ENCODE measurements at regions of chr6 and their contacts with region 1.

Region 1: DNA sequence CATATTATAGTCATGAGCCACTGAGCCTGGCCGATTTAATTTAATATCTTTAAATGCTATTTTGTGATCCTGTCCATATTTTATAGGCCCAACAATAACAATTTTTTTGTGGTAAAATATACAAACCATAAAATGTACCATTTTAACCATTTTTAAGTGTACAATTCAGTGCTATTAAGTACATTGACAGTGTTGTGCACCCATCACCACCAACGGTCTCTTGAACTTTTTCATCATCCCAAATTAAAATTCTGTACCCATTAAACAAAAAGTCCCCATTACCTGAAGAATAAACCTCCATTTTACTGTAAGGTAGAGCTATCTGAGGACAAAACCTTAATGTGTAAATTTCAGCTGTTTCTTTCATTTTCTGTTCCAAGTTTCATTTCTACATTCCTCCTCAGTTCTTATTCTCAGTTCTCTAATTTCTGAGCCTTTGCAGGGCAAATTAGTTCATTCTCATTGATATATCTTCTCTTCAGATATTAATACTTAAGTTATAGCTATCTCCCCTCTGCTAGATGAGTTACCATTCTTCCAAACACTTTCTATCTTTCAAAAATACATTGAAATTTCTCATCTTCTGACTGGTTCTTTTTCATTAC is 10.3 kb downstream of the MTO1 start:
- DNase-seq: no peak
- H3K4me3 ChIP-seq: no peak overlapping the region
- H3K4me3 Mint-ChIP-seq: no peak overlapping the region
- H3K27ac Mint-ChIP-seq: no peak overlapping the region
- H3K4me1 ChIP-seq: no peaks in the 10 kb centered on the region
- H3K4me1 Mint-ChIP-seq: no peaks in the 10 kb centered on the region
- H3K27me3 ChIP-seq: no peaks in the 10 kb centered on the region
- H3K27me3 Mint-ChIP-seq: no peaks in the 10 kb centered on the region
- CTCF ChIP-seq: no peak

Region 2: GRCh38 chr6:73604020-73604419 is 132.2 kb after region 1 on chr6:
- CTCF ChIA-PET with region 1: no interaction called
- POLR2A ChIA-PET with region 1: no interaction called
- intact Hi-C with region 1: loop called (anchors 1 kb)
- DNase-seq: no peak
- H3K4me3 ChIP-seq: no peak overlapping the region
- H3K4me3 Mint-ChIP-seq: no peak overlapping the region
- H3K27ac Mint-ChIP-seq: no peak overlapping the region
- H3K4me1 ChIP-seq: no peaks in the 10 kb centered on the region
- H3K4me1 Mint-ChIP-seq: no peaks in the 10 kb centered on the region
- H3K27me3 ChIP-seq: no peaks in the 10 kb centered on the region
- H3K27me3 Mint-ChIP-seq: no peaks in the 10 kb centered on the region
- CTCF ChIP-seq: no peak